ENCODE measurements at regions of chr19 and their contacts with region 1.

Region 1: GRCh38 chr19:42097461-42097860 is 21.5 kb downstream of the ZNF574 start:
- DNase-seq: no peak
- H3K4me3 ChIP-seq: no peak overlapping the region
- H3K27ac ChIP-seq: no peak overlapping the region
- H3K4me1 ChIP-seq: peaks cover 4% of the 10 kb centered on the region; the same call in 1 of the 2 replicates
- H3K27me3 ChIP-seq: no peaks in the 10 kb centered on the region
- CTCF ChIP-seq: no peak

Region 2: GRCh38 chr19:41905273-41906002 is 192.0 kb before region 1 on chr19:
- CTCF ChIA-PET with region 1: interaction called, 13 read pairs
- POLR2A ChIA-PET with region 1: no interaction called
- intact Hi-C with region 1: no loop called
- DNase-seq: no peak
- H3K4me3 ChIP-seq: no peak overlapping the region
- H3K27ac ChIP-seq: no peak overlapping the region
- H3K4me1 ChIP-seq: peaks cover 19% of the 10 kb centered on the region
- H3K27me3 ChIP-seq: no peaks in the 10 kb centered on the region
- CTCF ChIP-seq: no peak

Region 3: GRCh38 chr19:42548552-42548951 is 451.1 kb after region 1 on chr19:
- CTCF ChIA-PET with region 1: no interaction called
- POLR2A ChIA-PET with region 1: no interaction called
- intact Hi-C with region 1: no loop called
- DNase-seq: no peak
- H3K4me3 ChIP-seq: no peak overlapping the region
- H3K27ac ChIP-seq: no peak overlapping the region
- H3K4me1 ChIP-seq: no peaks in the 10 kb centered on the region
- H3K27me3 ChIP-seq: no peaks in the 10 kb centered on the region
- CTCF ChIP-seq: no peak

Measured in PC-9 (cell line).